Prostate gland (tissue), 2 donors: ENCODE measurements at regions of chr9 and their contacts with region 1.

Region 1: DNA sequence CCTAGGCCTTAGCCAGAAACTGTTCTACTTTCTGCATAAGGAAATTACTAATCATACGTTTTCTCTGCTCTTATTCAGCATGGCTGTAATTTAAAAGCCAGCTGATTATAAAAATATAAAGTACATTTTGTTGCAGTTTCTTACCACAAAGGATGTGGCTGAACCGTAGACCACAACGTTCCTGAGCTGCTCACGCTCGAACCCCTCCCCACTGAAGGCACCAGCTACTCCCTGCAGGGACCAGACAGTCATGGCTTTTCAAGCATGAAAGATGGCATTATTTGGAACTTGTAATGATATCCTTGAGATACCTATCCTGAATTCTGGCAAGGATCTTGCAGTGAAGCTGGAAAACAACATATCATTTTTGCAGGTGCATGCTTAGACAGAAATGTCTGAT is 91.8 kb upstream of the DMRT1 start:
- DNase-seq: no peak
- H3K4me3 ChIP-seq: no peak overlapping the region
- H3K27ac ChIP-seq: peak overlapping the region in 1 of 2 donors; percentile 75
- H3K4me1 ChIP-seq: peaks cover 8% of the 10 kb centered on the region
- H3K27me3 ChIP-seq: no peaks in the 10 kb centered on the region
- CTCF ChIP-seq: no peak
- POLR2A ChIP-seq: no peak

Region 2: GRCh38 chr9:489198-490197 is 260.2 kb before region 1 on chr9:
- intact Hi-C with region 1: no loop called
- DNase-seq: peak; percentile 43
- H3K4me3 ChIP-seq: no peak overlapping the region
- H3K27ac ChIP-seq: peak overlapping the region in 1 of 2 donors; percentile 26
- H3K4me1 ChIP-seq: no peaks in the 10 kb centered on the region
- H3K27me3 ChIP-seq: no peaks in the 10 kb centered on the region
- CTCF ChIP-seq: no peak
- POLR2A ChIP-seq: no peak

Region 3: DNA sequence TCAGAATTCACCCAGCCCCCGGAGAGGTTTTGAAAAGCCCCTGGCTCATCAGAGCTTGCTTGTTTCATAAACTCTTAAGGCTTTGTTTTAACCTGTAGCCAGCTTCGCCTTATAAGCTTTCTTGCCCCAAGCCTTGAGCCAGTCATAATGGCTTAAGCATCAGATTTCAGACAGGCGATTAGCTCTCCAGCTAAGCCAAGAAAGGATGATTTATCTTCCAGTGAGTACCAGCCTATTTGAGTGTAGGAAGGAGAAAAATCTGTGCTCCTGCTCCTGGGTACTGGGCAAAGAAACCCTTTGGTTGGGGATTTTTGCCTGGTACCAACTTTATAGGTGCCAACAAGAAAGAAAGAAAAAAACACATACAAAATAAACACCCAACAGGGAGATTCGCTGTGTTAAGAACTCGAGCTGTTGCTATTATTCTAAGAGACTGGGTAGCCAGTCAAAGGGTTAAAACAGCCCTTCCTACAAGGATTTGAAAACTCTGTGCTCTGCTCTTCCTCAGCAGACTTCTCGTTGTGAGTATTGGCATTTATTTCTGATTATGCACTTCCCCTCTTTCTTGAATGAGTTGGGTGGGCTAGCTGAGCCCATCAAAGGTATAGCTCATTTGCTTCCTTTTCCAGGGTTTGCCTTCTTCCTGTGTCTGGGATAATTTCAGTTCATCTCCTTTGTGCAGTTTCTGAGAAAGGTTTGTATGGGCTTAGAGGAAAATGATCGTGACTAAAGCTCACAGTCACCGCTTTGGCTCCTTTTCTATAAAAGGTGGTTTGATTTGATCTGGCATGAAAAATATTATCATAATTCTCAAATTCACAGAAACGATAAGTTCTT is 65.4 kb before region 1 on chr9:
- intact Hi-C with region 1: loop called (anchors 5 kb)
- DNase-seq: peak; percentile 43
- H3K4me3 ChIP-seq: peak overlapping the region; percentile 7 to 14
- H3K27ac ChIP-seq: peak overlapping the region; percentile 64 to 65
- H3K4me1 ChIP-seq: peaks cover 9% of the 10 kb centered on the region
- H3K27me3 ChIP-seq: no peaks in the 10 kb centered on the region
- CTCF ChIP-seq: no peak
- POLR2A ChIP-seq: peak; percentile 21

Region 4: GRCh38 chr9:706606-707459 is 42.9 kb before region 1 on chr9:
- intact Hi-C with region 1: loop called (anchors 5 kb)
- DNase-seq: peak; percentile 64
- H3K4me3 ChIP-seq: peak overlapping the region; percentile 37 to 50
- H3K27ac ChIP-seq: peak overlapping the region; percentile 83 to 87
- H3K4me1 ChIP-seq: no peaks in the 10 kb centered on the region
- H3K27me3 ChIP-seq: no peaks in the 10 kb centered on the region
- CTCF ChIP-seq: no peak
- POLR2A ChIP-seq: no peak